ENCODE measurements at regions of chr1 and their contacts with region 1.

Region 1: DNA sequence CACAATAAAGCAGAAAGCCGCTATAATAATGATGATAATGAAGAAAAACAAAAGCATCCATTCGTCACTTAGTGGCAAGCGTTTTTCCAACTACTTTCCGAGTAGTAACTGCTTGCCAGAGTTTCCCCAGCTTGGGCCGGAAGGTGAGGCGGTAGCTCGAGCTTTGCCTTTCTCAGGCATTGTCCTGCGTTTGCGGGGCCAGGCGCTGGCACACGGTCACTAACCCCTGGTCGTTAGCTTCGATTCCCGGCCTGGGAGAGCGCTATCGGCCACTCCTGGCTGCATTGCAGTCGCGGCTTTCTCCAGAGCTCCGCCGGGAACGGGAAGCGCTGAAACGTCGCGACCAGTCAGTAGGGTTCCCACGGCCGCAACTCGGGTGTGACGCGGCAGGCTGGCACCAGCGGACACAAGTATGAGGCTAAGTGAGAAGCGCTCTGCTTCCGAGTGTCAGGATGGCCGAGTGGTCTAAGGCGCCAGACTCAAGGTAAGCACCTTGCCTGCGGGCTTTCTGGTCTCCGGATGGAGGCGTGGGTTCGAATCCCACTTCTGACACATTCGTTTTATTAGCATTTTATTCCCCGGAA is 14.6 kb upstream of the ZNF692 start:
- DNase-seq: peak; percentile 96
- ATAC-seq: peak; percentile 92
- H3K4me3 ChIP-seq: peak overlapping the region; percentile 88 to 98
- H3K27ac ChIP-seq: peak overlapping the region; percentile 96
- H3K4me1 ChIP-seq: peaks cover 8% of the 10 kb centered on the region
- H3K27me3 ChIP-seq: peaks cover 3% of the 10 kb centered on the region; the same call in 1 of the 2 replicates
- CTCF ChIP-seq: no peak

Region 2: DNA sequence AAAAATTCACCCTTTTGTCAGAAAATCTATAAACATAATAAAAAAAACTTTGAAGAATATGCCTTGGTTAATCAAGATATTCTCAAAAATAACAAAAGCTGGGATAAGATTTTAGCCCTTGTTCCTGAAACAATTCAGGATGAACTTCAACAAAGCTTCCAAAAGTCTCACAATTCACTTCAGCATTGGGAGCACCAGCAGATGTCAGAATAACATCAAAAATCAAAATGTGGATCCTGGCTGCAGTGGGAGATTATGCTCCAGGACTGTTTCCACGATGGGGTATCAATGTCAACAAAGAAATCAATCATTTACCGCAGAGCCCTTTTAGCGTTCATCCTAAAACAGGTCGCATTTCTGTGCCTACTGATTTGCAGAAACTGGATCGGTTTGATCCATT is 1830.1 kb before region 1 on chr1:
- CTCF ChIA-PET with region 1: no interaction called
- POLR2A ChIA-PET with region 1: interaction called, 12 read pairs
- in situ Hi-C with region 1: no loop called
- intact Hi-C with region 1: no loop called
- DNase-seq: no peak
- ATAC-seq: no peak
- H3K4me3 ChIP-seq: no peak overlapping the region
- H3K27ac ChIP-seq: no peak overlapping the region
- H3K4me1 ChIP-seq: no peaks in the 10 kb centered on the region
- H3K27me3 ChIP-seq: no peaks in the 10 kb centered on the region
- CTCF ChIP-seq: no peak; the same call in 1 of the 2 replicates

Region 3: GRCh38 chr1:248183996-248184395 is 689.5 kb before region 1 on chr1:
- CTCF ChIA-PET with region 1: no interaction called
- POLR2A ChIA-PET with region 1: no interaction called
- in situ Hi-C with region 1: no loop called
- intact Hi-C with region 1: no loop called
- DNase-seq: no peak
- ATAC-seq: no peak
- H3K4me3 ChIP-seq: no peak overlapping the region
- H3K27ac ChIP-seq: no peak overlapping the region
- H3K4me1 ChIP-seq: no peaks in the 10 kb centered on the region
- H3K27me3 ChIP-seq: no peaks in the 10 kb centered on the region
- CTCF ChIP-seq: no peak

Region 4: GRCh38 chr1:248906009-248906752 is 32.7 kb after region 1 on chr1 and contains the start of gene PGBD2:
- CTCF ChIA-PET with region 1: no interaction called
- POLR2A ChIA-PET with region 1: interaction called, 14 read pairs
- in situ Hi-C with region 1: no loop called
- intact Hi-C with region 1: loop called (anchors 2 kb)
- DNase-seq: peak; percentile 64
- ATAC-seq: peak; percentile 98
- H3K4me3 ChIP-seq: peak within 1 kb of the TSS; percentile 67 to 91
- H3K27ac ChIP-seq: peak within 1 kb of the TSS; percentile 88
- H3K4me1 ChIP-seq: peaks cover 6% of the 10 kb centered on the region
- H3K27me3 ChIP-seq: no peaks in the 10 kb centered on the region; the same call in 1 of the 2 replicates
- CTCF ChIP-seq: peak; percentile 86
- total RNA-seq, gene PGBD2: 7.1 TPM